Gastrocnemius medialis (tissue), 4 donors: ENCODE measurements at regions of chr12 and their contacts with region 1.

Region 1: GRCh38 chr12:95473884-95474659 is at the start of gene METAP2:
- DNase-seq: peak; percentile 96 to 97
- ATAC-seq: peak; percentile 94 to 97
- H3K4me3 ChIP-seq: peak within 1 kb of the TSS; percentile 81 to 100 (median 90)
- H3K27ac ChIP-seq: peak within 1 kb of the TSS; percentile 93 to 99 (median 96)
- H3K4me1 ChIP-seq: peaks cover 14 to 34% of the 10 kb centered on the region in 2 donors
- H3K27me3 ChIP-seq: no peaks in the 10 kb centered on the region
- CTCF ChIP-seq: no peak
- POLR2A ChIP-seq: peak; percentile 77 to 80
- total RNA-seq, gene METAP2: 58.8 to 83.0 (median 62.4) TPM

Region 2: GRCh38 chr12:94839347-94839746 is 634.7 kb before region 1 on chr12:
- in situ Hi-C with region 1: no loop called
- intact Hi-C with region 1: no loop called
- DNase-seq: no peak
- ATAC-seq: no peak
- H3K4me3 ChIP-seq: no peak overlapping the region
- H3K27ac ChIP-seq: no peak overlapping the region
- H3K4me1 ChIP-seq: no peaks in the 10 kb centered on the region
- H3K27me3 ChIP-seq: no peaks in the 10 kb centered on the region
- CTCF ChIP-seq: no peak
- POLR2A ChIP-seq: no peak

Region 3: DNA sequence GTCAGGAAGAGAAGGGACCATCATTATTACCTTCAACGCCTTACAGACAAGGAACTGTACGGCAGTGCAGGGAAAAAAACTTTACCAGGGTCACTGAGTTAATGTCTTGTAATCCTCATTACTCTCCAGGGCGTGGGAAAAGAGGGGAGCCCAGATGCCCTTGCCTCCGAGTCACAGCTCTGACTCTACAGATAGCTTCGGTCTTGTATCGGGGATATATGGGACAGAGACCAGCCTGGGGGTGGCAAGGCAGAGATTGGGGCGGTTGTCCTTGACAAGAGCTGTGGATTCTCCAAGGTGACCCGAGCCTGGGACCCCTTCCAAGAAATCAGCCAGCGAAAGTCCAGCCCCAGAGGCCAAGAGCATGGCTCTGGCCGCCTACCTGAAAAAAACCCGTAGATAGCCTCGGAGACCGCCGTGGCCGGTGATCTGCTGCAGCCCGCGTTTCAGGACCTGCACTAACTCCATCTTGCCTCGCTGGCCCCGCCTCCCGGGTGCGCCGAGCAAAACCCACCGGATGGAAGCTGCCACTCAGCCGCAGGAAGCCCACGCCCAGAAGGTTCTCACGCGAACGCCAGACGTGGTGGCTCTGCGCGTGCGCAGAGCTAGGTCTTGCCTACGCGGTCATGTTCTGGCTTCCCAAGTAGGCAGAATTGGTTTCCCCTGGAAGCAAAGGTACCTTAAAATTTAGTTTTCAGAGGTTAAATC is 470.7 kb before region 1 on chr12 and contains the start of gene NDUFA12:
- in situ Hi-C with region 1: no loop called
- intact Hi-C with region 1: loop called (anchors 5 kb)
- DNase-seq: peak; percentile 91 to 93
- ATAC-seq: peak; percentile 98 to 99
- H3K4me3 ChIP-seq: peak within 1 kb of the TSS; percentile 78 to 94 (median 80)
- H3K27ac ChIP-seq: peak within 1 kb of the TSS; percentile 79 to 89 (median 84)
- H3K4me1 ChIP-seq: peaks cover 28 to 30% of the 10 kb centered on the region in 2 donors
- H3K27me3 ChIP-seq: no peaks in the 10 kb centered on the region
- CTCF ChIP-seq: no peak
- POLR2A ChIP-seq: peak; percentile 77 to 81
- total RNA-seq, gene NDUFA12: 225 to 382 (median 356) TPM

Region 4: GRCh38 chr12:95072900-95073697 is 401.0 kb before region 1 on chr12 and contains the start of gene NR2C1:
- in situ Hi-C with region 1: no loop called
- intact Hi-C with region 1: loop called (anchors 2 kb)
- DNase-seq: peak; percentile 84 to 92
- ATAC-seq: peak; percentile 95 to 97
- H3K4me3 ChIP-seq: peak within 1 kb of the TSS; percentile 77 to 95 (median 82)
- H3K27ac ChIP-seq: peak within 1 kb of the TSS; percentile 79 to 91 (median 84)
- H3K4me1 ChIP-seq: peaks cover 9 to 15% of the 10 kb centered on the region in 2 donors
- H3K27me3 ChIP-seq: no peaks in the 10 kb centered on the region
- CTCF ChIP-seq: peak in 1 of 5 experiments; percentile 55
- POLR2A ChIP-seq: peak in 1 of 2 donors; percentile 34
- total RNA-seq, gene NR2C1: 16.2 to 48.8 (median 22.5) TPM

Region 5: GRCh38 chr12:95217377-95218149 is 256.5 kb before region 1 on chr12 and contains the starts of genes FGD6 and VEZT:
- in situ Hi-C with region 1: no loop called
- intact Hi-C with region 1: loop called (anchors 1 kb)
- DNase-seq: peak; percentile 99
- ATAC-seq: peak; percentile 89 to 93
- H3K4me3 ChIP-seq: peak within 1 kb of the TSS; percentile 76 to 94 (median 88)
- H3K27ac ChIP-seq: peak within 1 kb of the TSS; percentile 90 to 98 (median 96)
- H3K4me1 ChIP-seq: peaks cover 43 to 47% of the 10 kb centered on the region in 2 donors
- H3K27me3 ChIP-seq: no peaks in the 10 kb centered on the region
- CTCF ChIP-seq: peak; percentile 36 to 53 (median 49)
- POLR2A ChIP-seq: peak; percentile 77 to 81
- total RNA-seq, gene FGD6: 2.9 to 8.4 (median 4.4) TPM
- total RNA-seq, gene VEZT: 100 to 131 (median 118) TPM

Region 6: DNA sequence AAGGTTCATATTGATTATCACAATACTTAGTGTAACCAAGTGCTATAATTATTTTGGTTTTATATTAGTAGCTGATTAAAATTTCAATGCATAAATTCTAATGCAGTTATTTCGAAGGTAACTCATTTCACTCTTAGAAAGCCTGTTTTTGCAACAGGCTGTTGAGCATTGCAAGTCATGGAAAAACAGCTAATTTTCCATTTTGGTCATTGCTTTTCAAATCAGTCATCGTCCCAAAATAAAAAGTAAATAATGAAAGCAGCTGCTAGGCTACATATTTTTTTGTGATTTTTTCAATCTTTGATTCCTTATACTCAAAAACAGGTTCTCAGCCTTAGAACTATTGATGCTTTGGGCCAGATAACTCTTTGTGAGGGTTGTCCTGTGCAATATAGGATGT is 233.5 kb before region 1 on chr12:
- in situ Hi-C with region 1: no loop called
- intact Hi-C with region 1: no loop called
- DNase-seq: no peak
- ATAC-seq: no peak
- H3K4me3 ChIP-seq: no peak overlapping the region
- H3K27ac ChIP-seq: no peak overlapping the region
- H3K4me1 ChIP-seq: peaks cover 47 to 49% of the 10 kb centered on the region in 2 donors
- H3K27me3 ChIP-seq: no peaks in the 10 kb centered on the region
- CTCF ChIP-seq: no peak
- POLR2A ChIP-seq: no peak

Region 7: GRCh38 chr12:95385246-95386035 is 88.6 kb before region 1 on chr12:
- in situ Hi-C with region 1: loop called in 1 of 4 experiments (anchors 5 kb)
- intact Hi-C with region 1: loop called (anchors 2 kb)
- DNase-seq: peak; percentile 64 to 76
- ATAC-seq: peak; percentile 99
- H3K4me3 ChIP-seq: peak overlapping the region; percentile 55 to 67 (median 58)
- H3K27ac ChIP-seq: peak overlapping the region; percentile 83 to 92 (median 87)
- H3K4me1 ChIP-seq: peaks cover 23 to 26% of the 10 kb centered on the region in 2 donors
- H3K27me3 ChIP-seq: no peaks in the 10 kb centered on the region
- CTCF ChIP-seq: peak in 1 of 5 experiments; percentile 22
- POLR2A ChIP-seq: no peak

Region 8: GRCh38 chr12:96035278-96036236 is 561.5 kb after region 1 on chr12 and contains the start of gene LTA4H:
- in situ Hi-C with region 1: no loop called
- intact Hi-C with region 1: loop called (anchors 10 kb)
- DNase-seq: peak; percentile 94 to 96
- ATAC-seq: peak; percentile 96 to 98
- H3K4me3 ChIP-seq: peak within 1 kb of the TSS; percentile 69 to 97 (median 89)
- H3K27ac ChIP-seq: peak within 1 kb of the TSS; percentile 80 to 90 (median 84)
- H3K4me1 ChIP-seq: peaks cover 15 to 18% of the 10 kb centered on the region in 2 donors
- H3K27me3 ChIP-seq: no peaks in the 10 kb centered on the region
- CTCF ChIP-seq: no peak
- POLR2A ChIP-seq: peak; percentile 58 to 76
- total RNA-seq, gene LTA4H: 36.7 to 46.9 (median 40.6) TPM